Activated CD4-positive, alpha-beta memory T cell treated with anti-CD3 and anti-CD28 coated beads for 36 hours (primary cell): ENCODE measurements at regions of chr1 and their contacts with region 1.

Region 1: DNA sequence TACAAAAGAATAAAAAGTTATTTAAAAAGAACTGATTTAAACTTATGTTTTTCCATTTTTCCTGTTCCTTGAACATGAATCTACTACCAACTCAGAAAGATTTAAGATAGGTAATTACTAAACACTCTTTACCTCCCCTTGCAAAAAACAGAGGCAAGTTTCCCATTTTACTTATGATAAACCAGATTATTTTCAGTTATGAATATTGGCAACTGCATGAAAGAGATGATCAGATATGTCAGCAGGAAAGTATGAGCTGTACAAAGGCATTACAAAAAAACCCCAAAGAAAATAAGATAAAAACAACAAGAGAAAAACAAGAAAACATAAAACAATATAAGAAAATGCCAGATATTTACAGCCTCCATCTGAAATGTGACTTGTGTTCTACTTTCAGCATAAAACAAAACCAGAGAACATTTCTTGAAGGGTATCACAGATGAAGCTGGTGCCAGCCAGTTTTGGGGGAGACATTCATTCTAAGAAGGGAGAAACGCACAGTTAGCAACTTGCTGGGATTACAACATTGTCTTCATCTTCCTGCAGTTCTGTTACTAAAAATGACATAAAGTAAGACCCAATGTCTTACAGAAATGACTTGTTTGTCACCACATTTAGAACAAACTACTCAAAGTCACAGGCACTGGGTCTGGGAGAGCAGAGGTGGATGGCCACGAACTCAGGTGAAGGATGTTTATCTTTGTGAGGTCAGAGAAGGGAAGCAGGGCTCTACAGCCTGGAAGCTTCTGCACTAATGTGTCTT is 19.1 kb downstream of the ZC3H12A start:
- DNase-seq: peak; percentile 54
- H3K4me3 Mint-ChIP-seq: peak overlapping the region; percentile 2
- H3K27ac Mint-ChIP-seq: peak overlapping the region; percentile 81
- H3K4me1 Mint-ChIP-seq: peaks cover 30% of the 10 kb centered on the region
- H3K27me3 Mint-ChIP-seq: no peaks in the 10 kb centered on the region

Region 2: GRCh38 chr1:37509181-37509580 is 15.7 kb after region 1 on chr1:
- CTCF ChIA-PET with region 1: interaction called, 14 read pairs
- POLR2A ChIA-PET with region 1: interaction called, 3 read pairs
- intact Hi-C with region 1: loop called (anchors 1 kb)
- DNase-seq: no peak
- H3K4me3 Mint-ChIP-seq: no peak overlapping the region
- H3K27ac Mint-ChIP-seq: peak overlapping the region; percentile 52
- H3K4me1 Mint-ChIP-seq: peaks cover 44% of the 10 kb centered on the region
- H3K27me3 Mint-ChIP-seq: no peaks in the 10 kb centered on the region